HepG2 (cell line): ENCODE measurements at regions of chr2 and their contacts with region 1.

Region 1: DNA sequence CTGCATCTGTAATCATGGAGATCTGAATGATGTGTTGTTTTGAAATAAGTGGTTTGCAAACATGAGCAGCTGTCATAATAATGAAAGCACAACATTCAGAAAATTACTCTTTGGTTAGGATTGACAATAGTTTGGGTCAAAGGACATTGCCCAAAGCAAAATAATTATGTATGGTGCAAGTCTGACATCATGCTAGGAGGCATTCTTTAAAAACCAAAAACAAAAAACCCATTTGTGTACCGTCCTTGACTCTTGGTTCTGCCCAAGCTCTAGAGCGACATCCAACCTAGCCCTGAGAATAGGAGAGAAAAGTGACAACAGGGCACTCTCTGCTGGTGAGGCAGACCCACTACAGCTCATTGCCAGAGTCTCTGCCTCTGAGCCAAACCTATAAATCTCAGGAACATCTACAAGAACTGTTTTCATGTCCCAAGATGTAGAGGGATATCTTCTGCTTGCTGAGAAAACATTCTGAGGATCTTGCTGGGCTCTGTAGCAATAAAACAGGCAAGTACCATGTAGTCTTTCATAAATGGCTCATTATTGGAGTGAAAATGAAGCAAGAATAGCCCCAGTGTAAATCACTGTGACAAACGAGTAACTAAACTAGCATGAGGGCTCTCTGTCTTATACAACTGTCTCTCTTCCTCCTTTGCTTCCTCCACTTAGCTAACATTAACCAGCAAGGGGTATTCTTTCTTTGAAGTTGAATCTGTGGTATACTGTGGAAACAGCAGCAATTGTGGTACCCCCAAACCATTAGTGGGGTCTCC is 266.8 kb upstream of the CXCR4 start:
- DNase-seq: peak; percentile 35
- ATAC-seq: peak; percentile 99
- H3K4me3 ChIP-seq: no peak overlapping the region
- H3K27ac ChIP-seq: no peak overlapping the region
- H3K4me1 ChIP-seq: no peaks in the 10 kb centered on the region
- H3K27me3 ChIP-seq: peaks cover 0 to 3% of the 10 kb centered on the region in 2 experiments; a peak in 1 of 5 replicates
- CTCF ChIP-seq: peak; percentile 78
- EP300 ChIP-seq: no peak
- POLR2A ChIP-seq: no peak
- RAD21 ChIP-seq: peak; percentile 56

Region 2: GRCh38 chr2:134988994-134989605 is 1395.6 kb before region 1 on chr2:
- CTCF ChIA-PET with region 1: no interaction called
- POLR2A ChIA-PET with region 1: no interaction called
- in situ Hi-C with region 1: loop called (anchors 10 kb)
- intact Hi-C with region 1: loop called (anchors 5 kb)
- DNase-seq: peak; percentile 33
- ATAC-seq: peak; percentile 81
- H3K4me3 ChIP-seq: no peak overlapping the region
- H3K27ac ChIP-seq: no peak overlapping the region
- H3K4me1 ChIP-seq: no peaks in the 10 kb centered on the region
- H3K27me3 ChIP-seq: peaks cover 0 to 5% of the 10 kb centered on the region in 2 experiments; a peak in 1 of 5 replicates
- CTCF ChIP-seq: peak; percentile 58
- EP300 ChIP-seq: no peak
- POLR2A ChIP-seq: no peak
- RAD21 ChIP-seq: no peak

Region 3: DNA sequence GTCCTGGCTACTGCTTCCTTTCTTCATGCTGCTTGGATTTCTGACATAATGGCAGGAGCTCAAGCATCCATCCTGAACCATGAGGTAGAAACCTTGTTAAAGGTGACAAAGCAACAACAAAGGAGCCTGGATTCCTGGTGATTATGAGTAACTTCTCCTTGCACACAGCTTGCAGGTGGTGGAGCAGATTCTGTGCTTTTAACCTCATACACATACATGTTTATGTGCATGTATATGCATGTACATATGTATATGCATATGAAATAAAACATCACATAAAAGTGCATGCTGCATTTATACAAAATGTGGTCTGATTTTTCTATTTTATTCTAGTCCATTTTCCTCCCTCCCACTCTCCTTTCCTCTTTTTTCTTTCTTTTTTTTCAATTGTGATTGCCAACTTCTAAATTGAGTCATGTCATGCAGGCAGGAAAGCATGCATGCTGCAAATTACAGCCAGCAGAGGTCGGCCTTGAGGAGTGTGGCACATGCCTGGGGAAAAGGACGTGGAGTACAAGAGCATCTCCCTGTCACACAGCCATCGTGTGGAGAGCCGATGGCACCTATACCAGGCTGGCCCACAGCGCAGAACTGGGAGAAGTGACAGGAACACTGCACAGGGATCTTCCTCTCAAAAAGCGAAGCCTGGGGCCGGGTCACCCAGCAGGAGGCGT is 565.6 kb before region 1 on chr2:
- CTCF ChIA-PET with region 1: no interaction called
- POLR2A ChIA-PET with region 1: no interaction called
- in situ Hi-C with region 1: loop called (anchors 10 kb)
- intact Hi-C with region 1: loop called (anchors 1 kb)
- DNase-seq: peak; percentile 29
- ATAC-seq: peak; percentile 91
- H3K4me3 ChIP-seq: no peak overlapping the region
- H3K27ac ChIP-seq: no peak overlapping the region
- H3K4me1 ChIP-seq: no peaks in the 10 kb centered on the region
- H3K27me3 ChIP-seq: peaks cover 0 to 7% of the 10 kb centered on the region in 2 experiments; a peak in 3 of 5 replicates
- CTCF ChIP-seq: peak; percentile 74
- EP300 ChIP-seq: no peak
- POLR2A ChIP-seq: no peak
- RAD21 ChIP-seq: no peak

Region 4: GRCh38 chr2:135913727-135914365 is 470.9 kb before region 1 on chr2:
- CTCF ChIA-PET with region 1: interaction called, 23 read pairs
- POLR2A ChIA-PET with region 1: no interaction called
- in situ Hi-C with region 1: loop called (anchors 5 kb)
- intact Hi-C with region 1: no loop called
- DNase-seq: peak; percentile 40
- ATAC-seq: peak; percentile 69
- H3K4me3 ChIP-seq: no peak overlapping the region
- H3K27ac ChIP-seq: no peak overlapping the region
- H3K4me1 ChIP-seq: no peaks in the 10 kb centered on the region
- H3K27me3 ChIP-seq: no peaks in the 10 kb centered on the region
- CTCF ChIP-seq: peak; percentile 58
- EP300 ChIP-seq: no peak
- POLR2A ChIP-seq: no peak
- RAD21 ChIP-seq: no peak

Region 5: GRCh38 chr2:135997380-135997779 is 387.3 kb before region 1 on chr2:
- CTCF ChIA-PET with region 1: interaction called, 11 read pairs
- POLR2A ChIA-PET with region 1: no interaction called
- in situ Hi-C with region 1: loop called (anchors 10 kb)
- intact Hi-C with region 1: loop called (anchors 1 kb)
- DNase-seq: peak; percentile 53
- ATAC-seq: peak; percentile 99
- H3K4me3 ChIP-seq: no peak overlapping the region
- H3K27ac ChIP-seq: no peak overlapping the region
- H3K4me1 ChIP-seq: no peaks in the 10 kb centered on the region
- H3K27me3 ChIP-seq: no peaks in the 10 kb centered on the region
- CTCF ChIP-seq: peak; percentile 74
- EP300 ChIP-seq: no peak
- POLR2A ChIP-seq: no peak
- RAD21 ChIP-seq: peak; percentile 39; the same call in 1 of the 2 replicates

Region 6: DNA sequence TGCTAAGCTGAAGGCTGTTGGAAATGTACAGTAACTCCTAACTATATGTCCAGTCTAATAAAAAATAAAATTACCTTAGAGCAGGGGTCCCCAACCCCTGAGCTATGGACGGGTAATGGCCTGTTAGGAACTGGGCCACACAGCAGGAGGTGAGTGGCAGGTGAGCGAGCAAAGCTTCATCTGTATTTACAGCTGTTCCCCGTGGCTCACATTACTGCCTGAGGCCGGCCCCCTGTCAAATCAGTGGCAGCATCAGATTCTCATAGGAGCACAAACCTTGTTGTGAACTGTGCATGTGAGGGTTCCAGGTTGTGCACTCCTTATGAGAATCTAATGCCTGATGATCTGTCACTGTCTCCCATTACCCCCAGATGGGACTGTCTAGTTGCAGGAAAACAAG is 193.7 kb before region 1 on chr2:
- CTCF ChIA-PET with region 1: no interaction called
- POLR2A ChIA-PET with region 1: no interaction called
- in situ Hi-C with region 1: no loop called
- intact Hi-C with region 1: no loop called
- DNase-seq: no peak
- ATAC-seq: no peak
- H3K4me3 ChIP-seq: no peak overlapping the region
- H3K27ac ChIP-seq: no peak overlapping the region
- H3K4me1 ChIP-seq: no peaks in the 10 kb centered on the region
- H3K27me3 ChIP-seq: no peaks in the 10 kb centered on the region
- CTCF ChIP-seq: no peak
- EP300 ChIP-seq: no peak
- POLR2A ChIP-seq: no peak
- RAD21 ChIP-seq: no peak

Region 7: GRCh38 chr2:136344339-136344738 is 40.4 kb before region 1 on chr2:
- CTCF ChIA-PET with region 1: no interaction called
- POLR2A ChIA-PET with region 1: no interaction called
- in situ Hi-C with region 1: no loop called
- intact Hi-C with region 1: no loop called
- DNase-seq: no peak
- ATAC-seq: peak; percentile 51; the same call in 2 of the 3 replicates
- H3K4me3 ChIP-seq: no peak overlapping the region
- H3K27ac ChIP-seq: no peak overlapping the region
- H3K4me1 ChIP-seq: no peaks in the 10 kb centered on the region
- H3K27me3 ChIP-seq: peaks cover 0 to 4% of the 10 kb centered on the region in 2 experiments; a peak in 1 of 5 replicates
- CTCF ChIP-seq: no peak
- EP300 ChIP-seq: no peak
- POLR2A ChIP-seq: no peak
- RAD21 ChIP-seq: no peak